Caco-2 (cell line): ENCODE measurements at regions of chr19 and their contacts with region 1.

Region 1: DNA sequence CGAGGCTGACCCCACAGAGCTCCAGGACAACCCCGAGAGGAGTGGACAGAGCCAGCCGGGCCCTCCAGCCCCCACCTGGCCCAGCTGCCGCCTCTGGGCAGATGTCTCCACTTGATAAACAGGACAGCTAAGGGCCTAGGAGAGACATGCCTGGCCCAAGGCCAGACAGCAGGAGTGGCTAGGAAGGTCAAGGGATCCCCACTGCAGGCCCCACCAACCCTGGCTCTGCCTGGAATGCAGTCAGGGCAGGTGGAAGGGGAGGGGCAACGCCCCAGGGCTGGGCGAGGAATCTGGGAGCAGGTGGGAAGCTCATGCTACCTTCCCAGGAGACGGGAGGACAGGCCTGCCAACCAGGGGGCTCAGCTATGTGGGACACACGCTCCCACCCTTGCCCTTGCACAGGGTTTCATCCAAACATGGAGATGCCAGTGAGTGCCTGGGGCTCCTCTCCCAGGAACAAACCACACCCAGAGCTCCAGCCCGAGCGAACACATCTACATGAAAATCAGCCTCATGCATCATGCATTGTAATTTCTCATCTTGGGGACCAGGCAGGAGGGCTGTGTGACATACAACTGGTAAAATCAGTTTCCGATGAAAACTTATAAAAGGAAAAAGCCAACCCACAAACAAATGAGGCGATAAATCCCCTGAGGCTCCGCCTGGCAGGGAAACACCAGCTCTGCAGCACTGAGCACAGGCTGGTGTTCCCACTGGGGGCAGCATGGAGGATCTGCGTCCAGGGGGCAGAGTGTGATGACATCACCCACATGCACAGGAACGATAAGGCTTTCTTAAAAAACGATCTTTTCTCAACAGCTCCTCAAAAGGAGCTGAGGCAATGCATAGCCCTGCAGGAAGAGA is 25.0 kb downstream of the SH3GL1 start:
- DNase-seq: peak; percentile 96 to 98
- H3K4me3 ChIP-seq: no peak overlapping the region
- H3K4me3 Mint-ChIP-seq: peak overlapping the region; percentile 57
- H3K27ac Mint-ChIP-seq: peak overlapping the region; percentile 93
- H3K4me1 ChIP-seq: peaks cover 40% of the 10 kb centered on the region
- H3K4me1 Mint-ChIP-seq: peaks cover 17% of the 10 kb centered on the region
- H3K27me3 ChIP-seq: no peaks in the 10 kb centered on the region
- H3K27me3 Mint-ChIP-seq: no peaks in the 10 kb centered on the region
- CTCF ChIP-seq: peak; percentile 33 to 61

Region 2: DNA sequence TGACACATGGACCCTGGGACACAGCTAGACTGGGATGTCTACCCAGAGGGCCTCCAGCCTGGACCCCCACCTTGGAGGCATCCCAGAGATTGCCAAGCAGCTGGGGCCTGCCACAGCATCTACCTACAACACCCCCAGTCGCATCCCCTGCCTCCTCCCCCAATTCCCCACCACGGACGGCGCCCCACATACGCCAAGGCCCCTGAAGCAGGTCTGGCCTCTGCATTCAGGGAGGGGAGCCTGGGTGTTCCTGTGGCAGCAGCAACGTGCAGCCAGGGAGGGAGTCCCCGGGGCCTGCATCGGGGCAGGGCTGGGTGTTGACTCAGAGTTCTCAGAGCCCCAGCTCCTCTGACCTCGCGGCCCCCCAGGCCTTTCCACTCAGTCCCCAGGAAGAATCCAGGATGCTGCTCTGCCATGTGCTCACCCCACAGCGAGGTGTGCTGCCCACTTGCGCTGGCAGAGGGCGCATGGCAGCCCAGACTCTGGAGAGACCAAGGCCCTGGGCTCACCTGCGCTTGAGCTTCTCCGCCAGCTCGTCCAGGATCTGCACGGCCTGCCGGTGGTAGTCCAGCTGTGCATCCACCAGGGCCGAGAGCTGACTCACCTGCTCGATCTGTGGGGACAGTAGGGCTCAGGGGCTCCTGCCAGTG is 12.4 kb before region 1 on chr19:
- CTCF ChIA-PET with region 1: interaction called, 14 read pairs
- POLR2A ChIA-PET with region 1: no interaction called
- intact Hi-C with region 1: no loop called
- DNase-seq: peak in 1 of 2 experiments; percentile 49
- H3K4me3 ChIP-seq: no peak overlapping the region
- H3K4me3 Mint-ChIP-seq: no peak overlapping the region
- H3K27ac Mint-ChIP-seq: peak overlapping the region; percentile 48
- H3K4me1 ChIP-seq: 0 out of 2 replicates have a peak, but pooled peaks cover 4% of the 10 kb centered on the region
- H3K4me1 Mint-ChIP-seq: no peaks in the 10 kb centered on the region
- H3K27me3 ChIP-seq: no peaks in the 10 kb centered on the region
- H3K27me3 Mint-ChIP-seq: no peaks in the 10 kb centered on the region
- CTCF ChIP-seq: peak; percentile 29 to 31

Region 3: DNA sequence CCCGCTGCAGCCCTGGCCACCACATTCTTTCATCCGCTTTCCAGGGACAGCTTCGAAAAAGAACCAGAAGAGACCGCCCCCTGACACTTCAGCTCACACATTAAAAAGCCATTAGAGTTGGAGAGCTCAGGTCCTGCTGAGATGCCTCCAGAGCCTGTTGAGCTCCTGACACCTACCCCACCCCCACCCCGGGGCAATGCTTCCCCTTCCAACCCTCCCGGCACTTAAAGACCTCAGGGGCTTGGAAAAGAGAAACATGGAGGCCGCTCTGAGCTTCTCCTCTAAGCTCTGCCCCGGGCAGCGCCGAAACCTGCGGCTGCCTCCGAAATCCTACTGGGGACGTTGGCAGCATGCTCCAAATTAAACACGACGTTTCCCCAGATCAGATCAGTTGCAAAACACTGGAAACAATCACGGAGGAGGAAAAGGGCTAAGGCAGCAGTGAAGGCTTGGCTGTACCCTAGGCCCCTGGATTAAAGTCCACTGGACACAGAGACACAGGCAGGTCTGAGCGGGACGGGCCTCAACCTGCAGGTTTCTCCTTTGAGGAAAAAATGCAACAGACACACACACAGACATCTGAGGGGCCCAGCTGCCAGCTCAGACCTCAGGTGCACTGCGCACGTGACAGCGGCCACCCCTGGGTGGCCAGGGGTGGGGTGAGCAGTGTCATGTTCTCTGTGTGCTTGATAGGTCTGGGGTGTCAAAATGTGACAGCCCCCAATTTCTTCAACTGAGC is 15.3 kb after region 1 on chr19:
- CTCF ChIA-PET with region 1: interaction called, 21 read pairs
- POLR2A ChIA-PET with region 1: interaction called, 21 read pairs
- intact Hi-C with region 1: loop called (anchors 1 kb)
- DNase-seq: peak; percentile 82 to 91
- H3K4me3 ChIP-seq: no peak overlapping the region
- H3K4me3 Mint-ChIP-seq: peak overlapping the region; percentile 46
- H3K27ac Mint-ChIP-seq: peak overlapping the region; percentile 53
- H3K4me1 ChIP-seq: peaks cover 41% of the 10 kb centered on the region
- H3K4me1 Mint-ChIP-seq: peaks cover 29% of the 10 kb centered on the region
- H3K27me3 ChIP-seq: no peaks in the 10 kb centered on the region
- H3K27me3 Mint-ChIP-seq: no peaks in the 10 kb centered on the region
- CTCF ChIP-seq: no peak